ENCODE measurements at regions of chr6 and their contacts with region 1.

Region 1: GRCh38 chr6:119147101-119148053 is 68.9 kb upstream of the FAM184A start:
- DNase-seq: no peak
- H3K4me3 ChIP-seq: peak overlapping the region in 1 of 2 experiments; percentile 36; a peak in 2 of 4 replicates
- H3K27ac ChIP-seq: peak overlapping the region; percentile 85 to 97
- H3K4me1 ChIP-seq: peaks cover 16 to 24% of the 10 kb centered on the region in 2 experiments
- H3K27me3 ChIP-seq: no peaks in the 10 kb centered on the region
- CTCF ChIP-seq: no peak
- EP300 ChIP-seq: peak; percentile 60 to 91; a peak in 3 of 4 replicates
- RAD21 ChIP-seq: no peak

Region 2: GRCh38 chr6:119158057-119158848 is 10.9 kb after region 1 on chr6:
- CTCF ChIA-PET with region 1: interaction called, 10 read pairs
- POLR2A ChIA-PET with region 1: no interaction called
- DNase-seq: no peak
- H3K4me3 ChIP-seq: no peak overlapping the region
- H3K27ac ChIP-seq: no peak overlapping the region
- H3K4me1 ChIP-seq: no peaks in the 10 kb centered on the region; a peak in 2 of 4 replicates
- H3K27me3 ChIP-seq: no peaks in the 10 kb centered on the region
- CTCF ChIP-seq: no peak
- EP300 ChIP-seq: no peak
- RAD21 ChIP-seq: no peak

Region 3: DNA sequence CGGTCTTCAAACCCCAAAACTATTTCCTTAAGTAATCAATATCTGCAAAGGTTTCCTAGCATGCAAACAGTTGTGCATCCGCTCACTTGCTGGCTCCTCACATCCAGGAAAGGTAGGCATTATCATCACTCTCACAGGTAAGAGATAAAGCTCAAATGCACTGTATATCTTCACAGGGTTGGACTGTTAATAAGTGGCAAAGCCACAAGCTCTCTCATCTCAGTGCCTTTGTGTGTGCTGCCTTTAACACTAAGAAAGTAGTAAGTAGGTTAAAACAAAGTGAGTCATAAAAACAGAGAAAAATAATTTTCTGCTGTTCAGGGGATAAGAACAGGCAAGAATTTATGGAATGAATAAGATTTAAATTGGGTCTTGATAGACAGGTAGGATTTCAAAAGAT is 180.9 kb after region 1 on chr6:
- CTCF ChIA-PET with region 1: interaction called, 20 read pairs
- POLR2A ChIA-PET with region 1: no interaction called
- DNase-seq: no peak
- H3K4me3 ChIP-seq: no peak overlapping the region
- H3K27ac ChIP-seq: peak overlapping the region in 1 of 2 experiments; percentile 79; a peak in 2 of 4 replicates
- H3K4me1 ChIP-seq: peaks cover 0 to 48% of the 10 kb centered on the region in 2 experiments; a peak in 2 of 4 replicates
- H3K27me3 ChIP-seq: no peaks in the 10 kb centered on the region
- CTCF ChIP-seq: no peak
- EP300 ChIP-seq: no peak
- RAD21 ChIP-seq: no peak

Region 4: GRCh38 chr6:119340796-119341487 is 193.6 kb after region 1 on chr6:
- CTCF ChIA-PET with region 1: interaction called, 27 read pairs
- POLR2A ChIA-PET with region 1: no interaction called
- DNase-seq: no peak
- H3K4me3 ChIP-seq: no peak overlapping the region
- H3K27ac ChIP-seq: no peak overlapping the region; a peak in 1 of 4 replicates
- H3K4me1 ChIP-seq: peaks cover 0 to 12% of the 10 kb centered on the region in 2 experiments; a peak in 2 of 4 replicates
- H3K27me3 ChIP-seq: no peaks in the 10 kb centered on the region
- CTCF ChIP-seq: no peak
- EP300 ChIP-seq: no peak
- RAD21 ChIP-seq: no peak

Region 5: DNA sequence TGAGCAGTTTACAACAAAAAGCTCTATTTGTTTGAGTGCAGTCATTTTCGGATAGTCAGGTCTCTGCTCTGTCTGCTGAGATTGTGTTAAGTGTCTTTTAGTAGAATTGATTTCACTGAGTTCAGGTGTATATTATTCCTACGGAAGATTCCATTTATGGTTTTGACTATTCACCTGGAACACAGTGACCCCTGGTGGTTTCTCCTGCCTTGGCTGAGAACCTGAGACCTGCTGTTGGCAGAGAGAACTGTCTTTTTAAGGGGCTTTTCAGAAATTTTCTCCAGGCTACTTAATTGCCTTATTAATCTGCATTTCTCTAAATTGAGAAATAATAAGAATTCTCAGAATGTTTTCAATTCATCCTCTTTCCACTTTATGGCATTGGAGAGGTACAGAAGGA is 1678.9 kb after region 1 on chr6:
- CTCF ChIA-PET with region 1: interaction called, 17 read pairs
- POLR2A ChIA-PET with region 1: no interaction called
- DNase-seq: peak; percentile 27
- H3K4me3 ChIP-seq: no peak overlapping the region
- H3K27ac ChIP-seq: no peak overlapping the region
- H3K4me1 ChIP-seq: no peaks in the 10 kb centered on the region
- H3K27me3 ChIP-seq: no peaks in the 10 kb centered on the region
- CTCF ChIP-seq: peak; percentile 73
- EP300 ChIP-seq: no peak
- RAD21 ChIP-seq: peak; percentile 70